ENCODE measurements at regions of chr4 and their contacts with region 1.

Region 1: GRCh38 chr4:24912252-24913118 is at the start of gene CCDC149:
- DNase-seq: peak; percentile 85
- H3K4me3 ChIP-seq: peak within 1 kb of the TSS; percentile 56
- H3K27ac ChIP-seq: peak within 1 kb of the TSS; percentile 67
- H3K4me1 ChIP-seq: no peaks in the 10 kb centered on the region
- H3K27me3 ChIP-seq: no peaks in the 10 kb centered on the region
- CTCF ChIP-seq: no peak
- total RNA-seq, gene CCDC149: 13.3 to 13.5 TPM

Region 2: DNA sequence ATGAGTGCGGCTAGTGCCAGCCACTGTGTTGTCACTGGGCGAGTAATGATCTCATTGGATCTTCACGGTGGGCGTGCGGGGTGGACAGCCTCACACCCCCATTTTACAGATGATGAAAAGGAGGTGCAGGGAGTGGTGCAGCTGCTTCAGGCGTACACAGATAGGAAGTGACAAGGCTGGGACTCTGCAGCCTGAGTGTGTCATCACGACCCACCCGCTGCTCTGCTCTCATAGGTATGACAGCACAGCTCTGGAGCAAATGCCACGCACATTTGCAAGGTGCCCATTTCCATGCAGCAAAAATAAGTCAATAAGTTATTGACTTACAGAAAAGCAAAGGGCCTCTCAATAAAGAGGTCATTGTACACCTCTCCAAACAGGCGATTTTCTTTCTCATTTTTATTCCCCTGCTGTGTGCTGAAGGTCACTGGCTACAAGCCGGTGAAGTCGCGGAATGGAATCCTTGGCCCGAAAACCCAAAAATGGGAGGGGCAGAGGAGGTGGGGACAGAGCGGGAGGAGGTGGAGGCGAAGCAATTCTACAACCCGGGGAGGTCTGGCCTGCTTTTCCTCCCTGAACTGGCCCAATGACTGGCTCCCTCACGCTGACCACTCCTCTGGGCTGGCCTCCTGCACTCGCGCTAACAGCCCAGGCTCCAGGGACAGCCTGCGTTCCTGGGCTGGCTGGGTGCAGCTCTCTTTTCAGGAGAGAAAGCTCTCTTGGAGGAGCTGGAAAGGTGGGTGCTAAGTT is 117.4 kb before region 1 on chr4 and contains the start of gene SOD3:
- intact Hi-C with region 1: loop called (anchors 5 kb)
- DNase-seq: peak; percentile 88
- H3K4me3 ChIP-seq: peak within 1 kb of the TSS; percentile 31
- H3K27ac ChIP-seq: peak within 1 kb of the TSS; percentile 74
- H3K4me1 ChIP-seq: peaks cover 3% of the 10 kb centered on the region
- H3K27me3 ChIP-seq: peaks cover 4% of the 10 kb centered on the region
- CTCF ChIP-seq: no peak
- total RNA-seq, gene SOD3: 22.3 to 35.8 TPM

Region 3: GRCh38 chr4:25144870-25145481 is 232.5 kb after region 1 on chr4:
- intact Hi-C with region 1: loop called (anchors 10 kb)
- DNase-seq: no peak
- H3K4me3 ChIP-seq: no peak overlapping the region
- H3K27ac ChIP-seq: no peak overlapping the region
- H3K4me1 ChIP-seq: no peaks in the 10 kb centered on the region
- H3K27me3 ChIP-seq: no peaks in the 10 kb centered on the region
- CTCF ChIP-seq: peak; percentile 40

Region 4: DNA sequence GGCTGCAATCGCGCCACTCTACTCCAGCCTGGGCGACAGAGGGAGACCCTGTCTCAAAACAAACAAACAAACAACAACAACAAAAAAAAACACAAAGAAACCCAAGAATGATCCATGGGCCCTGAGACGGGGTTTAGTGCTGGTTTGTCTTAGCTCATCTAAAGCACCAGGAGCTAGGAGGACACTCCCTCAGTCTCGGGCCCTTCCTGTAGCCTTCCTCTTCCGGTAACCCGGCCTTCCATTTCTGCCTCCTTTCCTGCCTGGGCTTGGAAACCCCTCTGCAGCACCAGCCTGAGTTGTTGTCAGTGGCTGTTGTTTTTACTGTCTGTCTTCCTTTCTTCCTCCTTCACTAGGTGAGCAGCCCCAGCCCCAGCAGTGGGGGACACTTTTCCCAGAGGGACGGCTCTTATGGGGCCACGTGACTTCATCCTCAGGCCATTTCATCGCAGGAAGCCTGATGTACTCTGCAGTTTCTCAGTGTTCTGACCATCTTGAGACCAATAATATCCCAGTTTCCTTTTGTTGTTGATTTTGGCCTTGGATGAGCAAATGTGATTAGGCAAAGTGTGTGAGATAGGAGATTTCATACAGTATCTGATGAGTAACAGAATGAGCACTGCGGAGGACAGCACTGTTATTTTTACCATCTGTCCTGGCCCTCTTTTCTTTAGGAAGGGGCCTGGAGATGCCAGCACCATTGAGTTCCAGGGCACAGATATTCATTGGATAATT is 554.6 kb after region 1 on chr4:
- intact Hi-C with region 1: no loop called
- DNase-seq: no peak
- H3K4me3 ChIP-seq: no peak overlapping the region
- H3K27ac ChIP-seq: no peak overlapping the region
- H3K4me1 ChIP-seq: no peaks in the 10 kb centered on the region
- H3K27me3 ChIP-seq: no peaks in the 10 kb centered on the region
- CTCF ChIP-seq: no peak

Measured in colonic mucosa (tissue), 4 donors.